Posterior cingulate gyrus (tissue), 11 donors: ENCODE measurements at regions of chr11 and their contacts with region 1.

Region 1: DNA sequence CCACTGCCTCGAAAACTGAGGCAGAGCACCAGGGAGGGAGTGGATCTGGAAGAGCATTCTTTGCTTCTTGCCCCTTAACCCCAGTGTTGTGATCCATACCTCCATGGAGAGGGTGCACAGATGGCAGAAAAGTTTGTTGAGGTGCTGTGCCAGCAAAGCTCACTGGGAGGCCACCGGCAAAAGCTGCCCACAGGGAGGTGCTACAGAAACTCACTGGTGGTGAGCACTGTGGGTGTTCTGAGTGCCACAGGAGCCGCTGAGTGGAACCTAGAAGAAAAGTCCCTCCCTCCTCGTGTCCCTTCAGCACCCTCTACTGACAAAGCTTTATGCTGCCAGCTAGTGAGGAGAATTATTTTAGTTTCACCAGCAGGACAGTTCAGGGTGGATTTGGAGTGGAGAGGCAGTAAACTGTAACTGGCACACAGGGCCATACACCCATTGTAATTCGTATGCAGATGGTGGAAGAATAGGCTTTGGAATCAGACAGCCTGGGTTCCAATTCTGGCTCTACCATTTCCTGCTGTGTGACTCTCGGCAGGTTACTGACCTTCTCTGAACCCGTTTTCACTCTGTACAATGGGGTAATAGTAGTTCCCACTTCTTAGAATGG is 84.6 kb downstream of the SWAP70 start:
- DNase-seq: peak in 7 of 10 donors; percentile 36 to 89 (median 58)

Region 2: DNA sequence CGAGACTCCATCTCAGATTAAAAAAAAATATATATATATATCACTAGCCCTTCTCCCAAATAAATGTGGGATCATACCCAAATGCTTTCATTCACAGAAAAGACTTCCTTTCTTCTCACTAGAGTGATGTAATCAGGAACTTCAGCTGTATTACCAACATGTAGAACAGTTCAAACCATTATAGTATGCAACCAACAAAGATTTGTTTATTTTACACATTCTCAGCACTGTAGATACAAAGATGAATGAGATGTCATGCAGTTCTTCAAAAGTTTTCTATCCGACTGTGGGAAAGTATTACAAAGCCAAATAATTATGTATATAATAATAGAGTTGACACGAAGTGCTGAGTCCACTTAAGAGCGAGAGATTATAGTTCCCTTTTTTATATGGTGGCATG is 309.9 kb before region 1 on chr11:
- intact Hi-C with region 1: no loop called
- DNase-seq: no peak

Region 3: DNA sequence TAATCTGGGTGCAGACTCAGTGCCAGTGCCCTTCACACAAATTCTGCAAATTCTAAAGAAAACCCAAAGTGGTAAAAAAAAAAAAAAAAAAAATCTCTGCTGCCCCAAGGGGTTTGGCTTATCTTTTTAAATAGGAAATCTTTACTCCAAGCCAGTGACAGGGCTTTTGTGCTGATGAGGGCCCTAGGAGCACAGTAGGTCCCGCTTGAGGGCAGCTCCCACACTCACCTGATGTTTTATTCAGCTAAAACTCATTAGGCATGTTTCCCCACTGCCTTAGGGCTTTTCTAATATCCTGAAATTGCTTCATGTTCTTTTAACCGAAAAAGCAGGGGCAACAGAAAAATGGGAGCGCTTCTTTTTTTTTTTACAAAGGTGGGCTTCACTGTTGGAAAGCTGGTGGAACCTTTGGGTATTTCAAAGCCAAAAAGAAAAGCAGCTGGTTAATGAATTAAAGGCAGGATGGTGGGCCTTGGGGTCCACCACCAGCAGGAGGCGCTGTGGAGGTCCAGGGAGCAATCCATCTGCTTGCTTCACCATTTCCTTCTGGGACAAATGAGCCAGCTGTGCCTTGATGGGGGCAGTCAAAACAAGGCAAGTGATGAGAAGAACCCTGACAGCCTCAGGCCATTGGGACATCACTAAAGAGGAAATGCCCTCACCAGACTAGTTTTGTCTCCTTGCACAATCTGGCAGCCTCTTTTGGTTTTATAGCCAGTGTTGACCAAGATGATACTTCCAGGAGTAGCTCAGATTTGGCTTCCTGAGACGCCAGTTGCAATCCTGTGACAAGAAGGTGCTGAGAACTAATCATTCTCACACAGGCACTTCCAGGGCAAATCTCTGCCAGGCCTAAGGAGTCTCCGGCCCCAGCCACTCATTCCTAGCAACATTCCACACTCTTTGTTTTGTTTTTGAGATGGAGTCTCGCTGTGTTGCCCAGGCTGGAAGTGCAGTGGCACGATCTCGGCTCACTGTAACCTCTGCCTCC is 213.4 kb before region 1 on chr11:
- intact Hi-C with region 1: loop called (anchors 10 kb)
- DNase-seq: peak in 8 of 10 donors; percentile 30 to 92 (median 50)

Region 4: DNA sequence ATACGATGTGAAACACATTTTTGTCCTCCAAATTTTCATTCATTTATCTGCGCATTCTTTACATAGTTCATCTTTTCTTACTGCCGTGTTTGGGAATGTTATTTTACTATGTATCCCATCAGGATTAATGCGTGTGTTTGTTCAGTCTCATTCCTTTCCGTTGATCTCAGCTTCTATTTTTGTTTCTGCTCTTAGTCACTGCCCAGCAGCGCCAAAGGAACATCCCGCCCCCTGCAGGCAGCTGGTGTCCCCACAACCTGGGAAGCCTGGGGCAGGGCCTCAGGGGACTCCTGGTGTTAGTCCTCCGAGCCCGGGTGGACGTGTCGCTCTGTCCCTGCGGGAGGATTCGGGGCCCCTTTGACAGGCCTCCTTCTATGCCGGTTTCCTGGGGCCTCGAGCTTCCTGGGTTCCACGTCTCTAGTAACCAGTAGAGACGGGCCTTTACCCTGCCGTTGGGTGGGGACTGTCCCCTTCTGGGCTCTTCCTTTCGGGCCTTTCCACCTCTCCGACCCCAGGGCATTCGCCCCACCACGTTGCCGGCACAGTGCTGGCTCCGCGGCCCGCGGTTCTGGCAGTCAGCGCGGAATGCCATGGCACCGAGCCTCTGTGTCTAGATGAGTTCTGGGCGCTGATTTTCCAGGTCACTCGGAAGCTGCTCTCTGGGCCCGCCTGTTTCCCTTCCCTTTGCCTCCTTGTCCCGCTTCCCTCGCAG is 135.2 kb before region 1 on chr11:
- intact Hi-C with region 1: loop called (anchors 1 kb)
- DNase-seq: peak; percentile 83 to 98 (median 94)

Region 5: GRCh38 chr11:9663699-9664275 is 84.7 kb before region 1 on chr11 and contains the start of gene SWAP70:
- intact Hi-C with region 1: loop called (anchors 5 kb)
- DNase-seq: peak; percentile 57 to 97 (median 78)

Region 6: GRCh38 chr11:9688716-9689511 is 59.6 kb before region 1 on chr11:
- intact Hi-C with region 1: no loop called
- DNase-seq: peak in 5 of 10 donors; percentile 29 to 90 (median 38)